CD4-positive, alpha-beta T cell (primary cell): ENCODE measurements at regions of chr20 and their contacts with region 1.

Region 1: GRCh38 chr20:41078329-41078728 is 49.7 kb downstream of the TOP1 start:
- DNase-seq: peak in 3 of 14 experiments; percentile 21 to 57 (median 30)
- ATAC-seq: peak; percentile 22
- H3K4me3 ChIP-seq: no peak overlapping the region
- H3K4me3 Mint-ChIP-seq: no peak overlapping the region
- H3K27ac ChIP-seq: no peak overlapping the region
- H3K27ac Mint-ChIP-seq: peak overlapping the region; percentile 42
- H3K4me1 ChIP-seq: peaks cover 7% of the 10 kb centered on the region
- H3K4me1 Mint-ChIP-seq: peaks cover 71% of the 10 kb centered on the region
- H3K27me3 ChIP-seq: no peaks in the 10 kb centered on the region
- H3K27me3 Mint-ChIP-seq: no peaks in the 10 kb centered on the region
- CTCF ChIP-seq: peak; percentile 18

Region 2: DNA sequence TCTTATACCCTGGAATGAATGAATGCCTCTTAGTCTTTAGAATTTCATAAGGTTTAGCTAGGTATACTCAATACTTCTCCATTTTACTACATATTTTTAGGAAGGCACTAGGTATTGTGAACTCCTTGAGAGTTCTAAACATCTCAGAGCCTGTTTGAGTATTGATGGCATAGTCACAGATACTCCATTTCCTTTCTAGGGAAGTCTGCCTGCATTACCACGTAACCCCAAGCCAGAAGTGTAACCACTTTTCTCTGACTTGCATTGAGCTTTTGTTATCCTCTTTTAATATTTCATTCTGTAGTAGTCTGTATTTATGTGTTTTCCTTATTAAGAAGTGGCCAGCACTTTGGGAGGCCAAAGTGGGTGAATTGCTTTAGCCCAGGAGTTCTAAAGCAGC is 37.5 kb before region 1 on chr20:
- CTCF ChIA-PET with region 1: no interaction called
- POLR2A ChIA-PET with region 1: no interaction called
- intact Hi-C with region 1: loop called in 1 of 2 experiments (anchors 5 kb)
- DNase-seq: peak in 1 of 14 experiments; percentile 21
- ATAC-seq: peak; percentile 71
- H3K4me3 ChIP-seq: no peak overlapping the region
- H3K4me3 Mint-ChIP-seq: peak overlapping the region; percentile 60
- H3K27ac ChIP-seq: no peak overlapping the region
- H3K27ac Mint-ChIP-seq: no peak overlapping the region
- H3K4me1 ChIP-seq: peaks cover 32% of the 10 kb centered on the region
- H3K4me1 Mint-ChIP-seq: peaks cover 89% of the 10 kb centered on the region
- H3K27me3 ChIP-seq: no peaks in the 10 kb centered on the region
- H3K27me3 Mint-ChIP-seq: no peaks in the 10 kb centered on the region
- CTCF ChIP-seq: no peak

Region 3: DNA sequence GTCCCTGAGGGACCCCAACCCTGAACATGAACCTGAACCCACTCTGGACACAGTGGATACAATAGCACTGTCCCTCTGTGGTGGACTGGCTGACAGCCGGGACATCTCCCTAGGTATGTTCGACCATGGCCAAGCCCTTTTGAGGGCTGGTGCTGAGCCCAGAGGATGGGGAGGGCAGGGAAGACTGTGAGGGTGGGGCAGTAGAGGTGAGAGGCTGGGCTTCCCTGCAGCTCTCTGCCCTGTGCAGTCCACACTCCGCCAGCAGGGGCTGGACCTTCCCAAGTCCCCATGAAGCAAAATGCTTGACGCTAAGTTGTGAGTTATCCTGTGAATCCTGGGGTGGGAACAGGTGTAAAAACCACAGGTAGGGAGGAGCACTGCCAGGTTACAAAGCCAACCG is 273.8 kb after region 1 on chr20:
- CTCF ChIA-PET with region 1: no interaction called
- POLR2A ChIA-PET with region 1: no interaction called
- intact Hi-C with region 1: no loop called
- DNase-seq: no peak
- ATAC-seq: no peak
- H3K4me3 ChIP-seq: no peak overlapping the region
- H3K4me3 Mint-ChIP-seq: no peak overlapping the region
- H3K27ac ChIP-seq: no peak overlapping the region
- H3K27ac Mint-ChIP-seq: no peak overlapping the region
- H3K4me1 ChIP-seq: no peaks in the 10 kb centered on the region
- H3K4me1 Mint-ChIP-seq: no peaks in the 10 kb centered on the region
- H3K27me3 ChIP-seq: no peaks in the 10 kb centered on the region
- H3K27me3 Mint-ChIP-seq: no peaks in the 10 kb centered on the region
- CTCF ChIP-seq: no peak